ENCODE measurements at regions of chr9 and their contacts with region 1.

Region 1: DNA sequence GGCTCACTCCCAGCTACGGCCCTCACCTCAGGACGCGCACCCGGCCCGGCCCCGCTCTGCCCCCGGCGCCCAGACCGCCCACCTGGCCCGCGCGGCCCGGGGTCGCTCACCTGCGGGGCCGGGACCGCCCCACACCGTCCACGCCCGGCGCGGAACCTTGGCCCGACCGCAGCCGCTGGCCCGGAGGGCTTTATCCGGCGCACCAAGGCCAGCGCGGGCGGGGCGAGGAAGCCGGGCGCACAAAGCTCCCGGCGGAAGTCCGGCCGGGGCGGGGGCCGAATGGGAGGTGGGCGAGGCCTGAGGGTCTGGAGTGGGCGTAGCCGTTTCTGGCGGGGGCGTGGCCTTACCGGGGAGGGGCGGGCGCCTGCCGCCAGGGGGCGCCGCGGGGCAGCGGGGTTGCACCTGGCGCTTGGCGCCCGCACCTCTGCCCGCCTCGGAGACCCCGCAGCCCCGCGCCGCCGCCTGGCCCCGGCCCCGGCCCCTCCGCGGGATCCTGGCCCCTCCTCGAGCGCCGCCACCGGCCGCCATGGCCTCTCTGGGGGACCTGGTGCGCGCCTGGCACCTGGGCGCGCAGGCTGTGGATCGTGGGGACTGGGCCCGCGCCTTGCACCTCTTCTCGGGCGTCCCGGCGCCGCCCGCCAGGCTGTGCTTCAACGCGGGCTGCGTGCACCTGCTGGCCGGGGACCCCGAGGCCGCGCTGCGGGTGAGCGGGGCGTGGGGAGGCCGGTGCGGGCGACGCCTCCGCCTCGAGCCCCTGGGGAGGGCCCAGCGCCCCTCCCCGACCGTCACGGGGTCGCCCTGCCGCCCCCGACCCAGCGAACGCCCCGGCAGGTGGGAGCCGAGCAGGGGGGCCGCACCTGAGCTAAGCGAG is at the starts of genes EXD3 and NOXA1:
- DNase-seq: peak; percentile 97
- ATAC-seq: peak; percentile 95
- H3K4me3 Mint-ChIP-seq: peak within 1 kb of the TSS; percentile 81
- H3K27ac Mint-ChIP-seq: peak within 1 kb of the TSS; percentile 24
- H3K4me1 Mint-ChIP-seq: peaks cover 13% of the 10 kb centered on the region
- H3K27me3 Mint-ChIP-seq: no peaks in the 10 kb centered on the region
- CTCF ChIP-seq: no peak
- total RNA-seq, gene EXD3: 8.4 and 12.8 TPM in 2 replicates
- total RNA-seq, gene NOXA1: 2.6 and 3.9 TPM in 2 replicates

Region 2: GRCh38 chr9:137000177-137000883 is 422.9 kb before region 1 on chr9:
- CTCF ChIA-PET with region 1: no interaction called
- POLR2A ChIA-PET with region 1: interaction called, 13 read pairs
- intact Hi-C with region 1: no loop called
- DNase-seq: no peak
- ATAC-seq: peak; percentile 69
- H3K4me3 Mint-ChIP-seq: peak overlapping the region; percentile 75
- H3K27ac Mint-ChIP-seq: peak overlapping the region; percentile 83
- H3K4me1 Mint-ChIP-seq: peaks cover 55% of the 10 kb centered on the region
- H3K27me3 Mint-ChIP-seq: no peaks in the 10 kb centered on the region
- CTCF ChIP-seq: no peak

Region 3: GRCh38 chr9:137302176-137302994 is 120.9 kb before region 1 on chr9 and contains the start of gene NRARP:
- CTCF ChIA-PET with region 1: interaction called, 3 read pairs
- POLR2A ChIA-PET with region 1: interaction called, 18 read pairs
- intact Hi-C with region 1: loop called (anchors 1 kb)
- DNase-seq: peak; percentile 95
- ATAC-seq: peak; percentile 85
- H3K4me3 Mint-ChIP-seq: peak within 1 kb of the TSS; percentile 74
- H3K27ac Mint-ChIP-seq: no peak within 1 kb of the TSS
- H3K4me1 Mint-ChIP-seq: peaks cover 16% of the 10 kb centered on the region
- H3K27me3 Mint-ChIP-seq: peaks cover 10% of the 10 kb centered on the region
- CTCF ChIP-seq: no peak
- total RNA-seq, gene NRARP: 1.9 and 3.0 TPM in 2 replicates

Region 4: DNA sequence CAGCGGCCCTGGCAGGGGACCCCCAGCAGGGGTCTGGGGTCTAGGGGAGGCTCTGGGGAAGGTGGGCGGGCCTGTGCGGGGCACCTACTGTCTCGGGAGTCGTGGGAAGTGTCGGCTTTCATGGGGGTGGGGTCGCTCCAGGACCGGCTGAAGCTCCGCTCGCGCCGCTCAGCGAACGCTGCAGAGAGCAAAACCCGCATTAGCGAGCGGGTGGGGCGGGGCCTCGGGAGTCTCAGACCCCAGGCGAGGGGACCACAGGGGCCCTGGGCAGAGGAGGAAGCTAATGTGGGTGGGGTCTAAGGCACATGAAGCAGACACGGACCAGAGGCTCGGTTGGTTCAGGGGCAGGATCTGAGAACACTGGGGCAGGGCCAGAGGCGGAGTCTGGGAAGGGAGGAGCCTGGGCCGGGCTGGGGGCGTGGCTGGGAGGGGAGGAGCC is 30.4 kb after region 1 on chr9:
- CTCF ChIA-PET with region 1: interaction called, 4 read pairs
- POLR2A ChIA-PET with region 1: interaction called, 7 read pairs
- intact Hi-C with region 1: loop called (anchors 1 kb)
- DNase-seq: peak; percentile 61
- ATAC-seq: peak; percentile 88
- H3K4me3 Mint-ChIP-seq: peak overlapping the region; percentile 60
- H3K27ac Mint-ChIP-seq: no peak overlapping the region
- H3K4me1 Mint-ChIP-seq: peaks cover 23% of the 10 kb centered on the region
- H3K27me3 Mint-ChIP-seq: no peaks in the 10 kb centered on the region
- CTCF ChIP-seq: no peak

Region 5: GRCh38 chr9:137516144-137516917 is 93.1 kb after region 1 on chr9:
- CTCF ChIA-PET with region 1: no interaction called
- POLR2A ChIA-PET with region 1: no interaction called
- intact Hi-C with region 1: no loop called
- DNase-seq: no peak
- ATAC-seq: no peak
- H3K4me3 Mint-ChIP-seq: no peak overlapping the region
- H3K27ac Mint-ChIP-seq: no peak overlapping the region
- H3K4me1 Mint-ChIP-seq: peaks cover 2% of the 10 kb centered on the region
- H3K27me3 Mint-ChIP-seq: no peaks in the 10 kb centered on the region
- CTCF ChIP-seq: no peak

Region 6: GRCh38 chr9:137534256-137535117 is 111.2 kb after region 1 on chr9:
- CTCF ChIA-PET with region 1: no interaction called
- POLR2A ChIA-PET with region 1: no interaction called
- intact Hi-C with region 1: loop called (anchors 5 kb)
- DNase-seq: no peak
- ATAC-seq: peak; percentile 74
- H3K4me3 Mint-ChIP-seq: no peak overlapping the region
- H3K27ac Mint-ChIP-seq: peak overlapping the region; percentile 32
- H3K4me1 Mint-ChIP-seq: peaks cover 37% of the 10 kb centered on the region
- H3K27me3 Mint-ChIP-seq: no peaks in the 10 kb centered on the region
- CTCF ChIP-seq: no peak